Transverse colon (tissue), 4 donors: ENCODE measurements at regions of chr12 and their contacts with region 1.

Region 1: DNA sequence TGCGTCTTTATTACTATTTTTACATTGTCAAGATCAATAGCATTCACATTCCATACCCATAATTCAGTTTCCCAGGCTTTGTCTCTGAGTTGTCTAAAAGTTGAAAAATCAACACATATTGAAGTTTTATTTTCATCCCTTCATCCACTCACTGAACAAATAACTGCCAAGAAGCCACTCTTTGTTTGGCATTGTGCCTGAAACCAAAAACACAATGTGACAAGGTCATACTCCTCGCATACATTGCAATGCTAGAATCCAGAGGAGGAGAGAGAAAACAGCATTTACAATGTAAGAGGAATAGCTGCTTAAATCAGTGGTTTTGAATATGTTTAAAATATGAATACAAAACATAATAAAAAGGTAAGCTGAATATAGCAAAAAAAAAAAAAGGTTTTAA is 71.8 kb downstream of the CCDC60 start:
- DNase-seq: no peak
- H3K4me3 ChIP-seq: no peak overlapping the region
- H3K27ac ChIP-seq: no peak overlapping the region
- H3K4me1 ChIP-seq: no peaks in the 10 kb centered on the region
- H3K27me3 ChIP-seq: no peaks in the 10 kb centered on the region
- CTCF ChIP-seq: no peak
- EP300 ChIP-seq: no peak
- POLR2A ChIP-seq: no peak

Region 2: GRCh38 chr12:119122751-119123150 is 283.6 kb before region 1 on chr12:
- in situ Hi-C with region 1: loop called (anchors 10 to 25 kb)
- intact Hi-C with region 1: no loop called
- DNase-seq: no peak
- H3K4me3 ChIP-seq: no peak overlapping the region
- H3K27ac ChIP-seq: no peak overlapping the region
- H3K4me1 ChIP-seq: no peaks in the 10 kb centered on the region
- H3K27me3 ChIP-seq: no peaks in the 10 kb centered on the region
- CTCF ChIP-seq: no peak
- EP300 ChIP-seq: no peak
- POLR2A ChIP-seq: no peak